ENCODE measurements at regions of chr1 and their contacts with region 1.

Region 1: GRCh38 chr1:175035865-175036264 is 12.6 kb upstream of the MRPS14 start:
- DNase-seq: no peak
- H3K4me3 ChIP-seq: no peak overlapping the region
- H3K27ac ChIP-seq: no peak overlapping the region
- H3K4me1 ChIP-seq: peaks cover 0 to 6% (median 2%) of the 10 kb centered on the region in 4 experiments; a peak in 3 of 7 replicates
- H3K27me3 ChIP-seq: no peaks in the 10 kb centered on the region; a peak in 1 of 7 replicates
- CTCF ChIP-seq: no peak
- EP300 ChIP-seq: no peak
- POLR2A ChIP-seq: no peak
- RAD21 ChIP-seq: no peak

Region 2: DNA sequence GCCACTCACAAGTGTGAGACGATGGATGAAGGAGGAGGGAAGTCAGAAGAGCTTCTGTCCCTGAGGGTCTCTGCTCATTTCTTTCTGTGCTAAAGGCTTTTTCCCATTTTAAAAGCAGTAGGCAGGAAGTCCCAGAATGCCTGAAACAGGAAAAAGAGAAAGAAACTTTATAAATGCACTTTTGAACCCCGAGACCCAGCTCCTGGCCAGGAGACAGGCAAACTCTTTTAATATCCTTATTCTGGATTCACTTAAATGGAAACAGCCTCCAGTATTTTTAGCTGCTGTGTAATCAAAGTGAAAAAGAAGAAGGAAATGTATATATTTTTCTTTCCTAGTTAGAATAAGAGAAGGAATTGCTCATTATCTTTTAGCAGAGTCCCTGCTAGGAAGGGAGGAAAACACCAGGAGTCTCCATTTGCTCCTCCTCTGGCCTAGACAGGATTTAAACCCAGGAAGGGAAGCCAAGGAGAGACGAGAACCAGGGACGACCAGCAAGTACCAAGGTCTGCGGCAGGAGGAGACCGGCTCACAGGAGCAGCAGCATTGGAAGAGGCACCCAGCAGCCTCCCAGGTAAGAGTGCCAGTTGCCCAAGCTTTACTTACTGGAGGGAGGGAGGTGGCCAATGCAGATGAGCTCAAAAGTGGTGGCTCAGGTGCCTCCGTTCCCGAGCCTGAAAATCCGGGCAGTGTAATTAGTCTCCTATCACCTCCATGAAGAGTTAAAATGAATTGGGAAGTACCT is 31.7 kb after region 1 on chr1 and contains the start of gene TNN:
- CTCF ChIA-PET with region 1: interaction called, 11 read pairs
- POLR2A ChIA-PET with region 1: no interaction called
- DNase-seq: no peak
- H3K4me3 ChIP-seq: no peak within 1 kb of the TSS
- H3K27ac ChIP-seq: no peak within 1 kb of the TSS
- H3K4me1 ChIP-seq: peaks cover 0 to 10% (median 6%) of the 10 kb centered on the region in 4 experiments; a peak in 5 of 7 replicates
- H3K27me3 ChIP-seq: no peaks in the 10 kb centered on the region
- CTCF ChIP-seq: no peak
- EP300 ChIP-seq: no peak
- POLR2A ChIP-seq: no peak
- RAD21 ChIP-seq: no peak
- total RNA-seq, gene TNN: 0.30 and 0.31 TPM in 2 replicates

Region 3: DNA sequence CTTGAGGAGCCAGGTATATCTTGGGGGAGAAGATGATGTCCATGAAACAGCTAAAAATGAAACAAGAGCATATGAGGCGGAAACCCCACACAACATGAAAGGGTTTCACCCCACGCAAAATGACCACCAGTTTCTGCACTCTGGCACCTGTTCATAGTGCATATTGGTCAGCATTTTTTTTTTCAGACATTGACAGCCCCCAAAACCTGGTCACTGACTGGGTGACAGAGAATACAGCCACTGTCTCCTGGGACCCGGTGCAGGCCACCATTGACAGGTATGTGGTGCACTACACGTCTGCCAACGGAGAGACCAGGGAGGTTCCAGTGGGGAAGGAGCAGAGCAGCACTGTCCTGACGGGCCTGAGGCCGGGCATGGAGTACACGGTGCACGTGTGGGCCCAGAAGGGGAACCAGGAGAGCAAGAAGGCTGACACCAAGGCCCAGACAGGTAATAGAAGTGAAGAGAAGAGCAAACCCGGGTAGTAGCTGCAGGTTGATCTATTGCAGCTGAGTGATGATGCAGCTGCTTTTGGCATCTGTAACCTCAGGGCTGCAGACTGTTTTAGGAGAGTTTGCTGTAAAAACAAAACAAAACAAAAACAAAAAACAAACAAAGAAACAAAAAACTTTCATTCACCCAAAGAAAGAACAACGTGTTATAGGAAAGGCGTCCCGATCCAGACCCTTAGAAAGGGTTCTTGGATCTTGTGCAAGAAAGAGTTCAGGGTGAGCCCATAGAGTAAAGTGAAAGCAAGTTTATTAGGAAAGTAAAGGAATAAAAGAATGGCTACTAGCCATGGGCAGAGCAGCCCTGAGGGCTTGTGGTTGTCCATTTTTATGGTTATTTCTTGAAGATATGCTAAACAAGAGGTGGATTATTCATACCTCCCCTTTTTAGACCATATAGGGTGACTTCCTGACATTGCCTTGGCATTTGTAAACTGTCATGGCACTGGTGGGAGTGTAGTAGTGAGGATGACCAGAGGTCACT is 82.8 kb after region 1 on chr1:
- CTCF ChIA-PET with region 1: interaction called, 88 read pairs
- POLR2A ChIA-PET with region 1: no interaction called
- DNase-seq: no peak
- H3K4me3 ChIP-seq: no peak overlapping the region
- H3K27ac ChIP-seq: no peak overlapping the region
- H3K4me1 ChIP-seq: no peaks in the 10 kb centered on the region
- H3K27me3 ChIP-seq: no peaks in the 10 kb centered on the region
- CTCF ChIP-seq: no peak
- EP300 ChIP-seq: no peak
- POLR2A ChIP-seq: no peak
- RAD21 ChIP-seq: no peak

Region 4: GRCh38 chr1:175129997-175130648 is 94.3 kb after region 1 on chr1:
- CTCF ChIA-PET with region 1: interaction called, 88 read pairs
- POLR2A ChIA-PET with region 1: no interaction called
- DNase-seq: peak in 1 of 2 experiments; percentile 49
- H3K4me3 ChIP-seq: peak overlapping the region in 1 of 4 experiments; percentile 18; a peak in 1 of 8 replicates
- H3K27ac ChIP-seq: peak overlapping the region; percentile 89; the same call in 1 of the 2 replicates
- H3K4me1 ChIP-seq: peaks cover 0 to 26% (median 17%) of the 10 kb centered on the region in 4 experiments; a peak in 4 of 7 replicates
- H3K27me3 ChIP-seq: no peaks in the 10 kb centered on the region
- CTCF ChIP-seq: peak in 1 of 3 experiments; percentile 7; a peak in 1 of 4 replicates
- EP300 ChIP-seq: peak in 1 of 2 experiments; percentile 40; a peak in 1 of 3 replicates
- POLR2A ChIP-seq: peak in 1 of 2 experiments; percentile 31; a peak in 1 of 3 replicates
- RAD21 ChIP-seq: no peak

Region 5: GRCh38 chr1:175146529-175147213 is 110.8 kb after region 1 on chr1:
- CTCF ChIA-PET with region 1: interaction called, 66 read pairs
- POLR2A ChIA-PET with region 1: no interaction called
- DNase-seq: peak; percentile 61 to 95
- H3K4me3 ChIP-seq: peak overlapping the region in 1 of 4 experiments; percentile 34; a peak in 1 of 8 replicates
- H3K27ac ChIP-seq: no peak overlapping the region
- H3K4me1 ChIP-seq: peaks cover 0 to 4% (median 2%) of the 10 kb centered on the region in 4 experiments; a peak in 3 of 7 replicates
- H3K27me3 ChIP-seq: peaks cover 0 to 2% (median 0%) of the 10 kb centered on the region in 4 experiments; a peak in 3 of 7 replicates
- CTCF ChIP-seq: peak; percentile 87 to 95 (median 91)
- EP300 ChIP-seq: 0 out of 3 replicates have a peak, but pooled peaks of 1 of the 2 experiments have one; percentile 3
- POLR2A ChIP-seq: no peak
- RAD21 ChIP-seq: peak; percentile 45 to 62

Region 6: GRCh38 chr1:175169305-175170018 is 133.6 kb after region 1 on chr1:
- CTCF ChIA-PET with region 1: no interaction called
- POLR2A ChIA-PET with region 1: no interaction called
- DNase-seq: no peak
- H3K4me3 ChIP-seq: no peak overlapping the region
- H3K27ac ChIP-seq: no peak overlapping the region
- H3K4me1 ChIP-seq: no peaks in the 10 kb centered on the region
- H3K27me3 ChIP-seq: no peaks in the 10 kb centered on the region
- CTCF ChIP-seq: no peak
- EP300 ChIP-seq: no peak
- POLR2A ChIP-seq: no peak
- RAD21 ChIP-seq: no peak